MCF 10A (cell line): ENCODE measurements at regions of chr19 and their contacts with region 1.

Region 1: DNA sequence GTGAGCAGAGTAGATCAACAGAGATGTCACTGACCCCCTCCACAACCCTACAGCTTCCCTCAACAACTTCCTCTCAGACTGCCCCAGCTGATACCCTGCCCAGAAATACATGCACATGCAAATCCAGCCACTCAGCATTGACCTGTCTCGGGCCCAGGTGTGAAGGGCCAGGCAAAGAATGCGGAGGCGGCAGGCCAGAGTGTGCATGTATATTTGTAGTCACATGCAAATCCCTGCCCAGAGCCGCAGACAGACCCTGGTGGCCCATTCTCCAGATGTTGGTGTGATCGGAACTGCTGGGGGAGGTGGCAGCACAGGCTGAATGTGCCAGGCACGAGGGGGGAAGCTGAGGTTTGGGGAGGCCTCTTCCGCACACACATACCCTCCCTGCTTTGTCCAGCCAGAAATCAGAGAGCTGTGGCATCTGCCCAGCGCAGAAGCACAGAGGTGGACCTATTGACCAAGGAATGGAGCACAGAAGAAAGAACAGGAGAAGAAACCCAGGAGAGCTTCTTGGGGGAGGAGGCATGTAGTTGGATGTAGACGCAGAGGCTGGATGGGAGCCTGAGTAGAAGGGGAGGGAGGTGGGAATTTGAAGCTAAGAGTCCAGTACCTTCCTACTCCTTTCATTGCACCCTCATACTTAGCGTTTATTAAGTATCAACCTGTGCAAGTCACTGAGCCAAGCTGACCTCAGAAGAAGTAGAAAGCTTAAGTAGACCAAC is 14.4 kb downstream of the MEF2B start:
- DNase-seq: no peak
- H3K4me3 Mint-ChIP-seq: no peak overlapping the region
- H3K27ac Mint-ChIP-seq: no peak overlapping the region
- H3K4me1 Mint-ChIP-seq: no peaks in the 10 kb centered on the region
- H3K27me3 Mint-ChIP-seq: no peaks in the 10 kb centered on the region
- CTCF ChIP-seq: no peak

Region 2: GRCh38 chr19:19176950-19177349 is 21.3 kb after region 1 on chr19:
- CTCF ChIA-PET with region 1: interaction called, 33 read pairs
- POLR2A ChIA-PET with region 1: no interaction called
- intact Hi-C with region 1: no loop called
- DNase-seq: no peak
- H3K4me3 Mint-ChIP-seq: no peak overlapping the region
- H3K27ac Mint-ChIP-seq: no peak overlapping the region
- H3K4me1 Mint-ChIP-seq: peaks cover 6% of the 10 kb centered on the region
- H3K27me3 Mint-ChIP-seq: no peaks in the 10 kb centered on the region
- CTCF ChIP-seq: no peak

Region 3: DNA sequence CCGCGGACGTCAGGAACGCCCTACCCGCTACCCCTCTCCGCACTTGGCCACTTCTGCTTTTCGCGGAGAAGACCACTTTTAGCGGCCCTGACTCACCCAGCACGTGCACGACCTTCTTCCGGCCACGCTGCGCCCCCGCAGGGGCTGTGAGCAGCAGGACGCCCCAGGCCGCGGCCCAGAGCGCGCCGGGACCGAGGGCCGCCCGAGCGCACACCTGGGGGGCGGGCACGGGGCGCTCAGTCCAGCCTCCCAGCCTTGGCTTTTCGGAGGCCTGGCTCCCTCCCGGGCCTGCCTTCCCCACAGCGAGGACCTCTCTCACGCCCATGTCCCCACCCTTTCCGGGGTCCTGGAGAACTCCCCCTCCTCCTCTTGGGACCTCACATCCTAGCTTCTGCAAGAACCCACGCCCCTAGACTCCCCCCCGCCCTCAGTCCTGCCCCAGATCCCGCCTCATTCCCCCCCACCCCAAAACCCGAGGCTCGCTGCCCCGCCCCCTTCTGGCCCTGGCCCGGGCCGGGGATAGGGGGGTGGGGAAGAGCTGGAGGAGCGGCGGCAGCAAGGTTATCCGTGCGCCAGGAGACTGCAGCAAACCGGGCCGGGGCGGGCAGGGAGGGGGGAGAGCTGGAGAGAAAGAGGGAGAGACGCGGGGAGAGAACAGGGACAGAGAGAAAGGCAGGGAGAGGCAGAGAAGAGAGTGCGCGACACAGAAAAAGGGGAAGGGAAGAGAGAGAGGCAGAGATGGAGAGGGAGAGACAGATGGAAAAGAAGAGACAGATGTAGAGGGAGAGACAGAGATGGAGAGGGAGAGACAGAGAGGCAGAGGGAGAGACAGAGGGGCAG is 105.9 kb after region 1 on chr19:
- CTCF ChIA-PET with region 1: no interaction called
- POLR2A ChIA-PET with region 1: no interaction called
- intact Hi-C with region 1: no loop called
- DNase-seq: no peak
- H3K4me3 Mint-ChIP-seq: no peak overlapping the region
- H3K27ac Mint-ChIP-seq: no peak overlapping the region
- H3K4me1 Mint-ChIP-seq: peaks cover 5% of the 10 kb centered on the region
- H3K27me3 Mint-ChIP-seq: peaks cover 29% of the 10 kb centered on the region
- CTCF ChIP-seq: no peak

Region 4: DNA sequence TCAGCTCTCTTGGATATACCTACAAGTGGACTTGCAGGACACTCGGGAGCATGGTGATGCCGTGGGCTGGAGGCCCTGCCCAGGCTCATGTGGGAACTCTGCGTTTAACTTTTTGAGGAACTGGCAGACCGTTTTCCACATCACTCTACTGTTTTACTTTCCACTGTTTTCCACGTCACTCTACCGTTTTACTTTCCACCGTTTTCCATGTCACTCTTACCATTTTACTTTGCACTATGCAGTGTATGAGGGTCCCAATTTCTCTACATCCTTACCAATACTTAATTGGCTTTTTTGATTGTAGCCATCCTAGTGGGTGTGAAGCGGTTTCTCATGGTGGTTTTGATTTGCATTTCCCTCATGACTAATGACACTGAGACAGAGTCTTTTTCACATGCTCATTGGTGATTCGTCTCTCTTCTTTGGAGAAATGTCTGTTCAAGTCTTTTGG is 290.3 kb after region 1 on chr19:
- CTCF ChIA-PET with region 1: no interaction called
- POLR2A ChIA-PET with region 1: no interaction called
- intact Hi-C with region 1: no loop called
- DNase-seq: no peak
- H3K4me3 Mint-ChIP-seq: no peak overlapping the region
- H3K27ac Mint-ChIP-seq: no peak overlapping the region
- H3K4me1 Mint-ChIP-seq: peaks cover 25% of the 10 kb centered on the region
- H3K27me3 Mint-ChIP-seq: no peaks in the 10 kb centered on the region
- CTCF ChIP-seq: no peak